GM10248 (cell line): ENCODE measurements at regions of chr12 and their contacts with region 1.

Region 1: GRCh38 chr12:107549651-107550480 is 135.7 kb upstream of the PWP1 start:
- DNase-seq: no peak
- CTCF ChIP-seq: no peak

Region 2: GRCh38 chr12:107539196-107539939 is 10.5 kb before region 1 on chr12:
- CTCF ChIA-PET with region 1: interaction called, 12 read pairs
- POLR2A ChIA-PET with region 1: no interaction called
- DNase-seq: no peak
- CTCF ChIP-seq: no peak